Left colon (tissue), 2 donors: ENCODE measurements at regions of chr22 and their contacts with region 1.

Region 1: GRCh38 chr22:36781656-36782627 is 6.0 kb upstream of the IFT27 start:
- DNase-seq: peak; percentile 76 to 82
- ATAC-seq: peak; percentile 97

Region 2: GRCh38 chr22:36684841-36685240 is 97.1 kb before region 1 on chr22:
- intact Hi-C with region 1: no loop called
- DNase-seq: no peak
- ATAC-seq: no peak

Region 3: DNA sequence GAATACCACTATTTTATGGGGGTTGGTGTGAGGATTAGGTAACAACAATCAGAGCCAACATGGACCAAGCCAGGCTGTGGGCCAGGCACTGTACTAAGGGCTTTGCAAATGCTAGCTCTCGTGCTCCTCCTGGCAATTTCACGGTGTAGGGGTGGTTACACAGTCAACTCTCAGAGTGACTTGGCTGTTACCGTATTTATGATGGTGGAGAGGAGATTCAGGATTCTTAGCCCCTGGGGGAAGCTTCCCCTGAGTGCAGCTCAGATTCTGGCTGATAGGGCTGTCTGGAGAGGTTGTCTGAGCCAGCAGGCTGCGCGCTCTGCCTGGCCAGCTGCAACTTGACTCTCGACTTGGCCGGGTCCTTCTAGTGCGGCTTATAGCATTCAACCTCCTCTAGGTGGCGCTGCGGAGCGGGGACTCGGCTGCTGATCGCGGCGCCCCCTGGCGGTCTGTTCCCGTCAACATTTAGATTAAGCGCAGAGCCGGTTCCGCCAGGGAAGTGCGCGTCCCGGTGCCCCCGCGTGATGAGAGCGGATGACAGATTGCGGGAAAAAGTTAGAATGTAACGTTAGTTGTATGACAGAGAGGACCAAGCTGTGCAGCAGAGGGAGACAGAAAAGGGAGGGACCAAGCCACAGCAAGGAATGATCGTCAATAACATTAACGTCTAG is 74.3 kb after region 1 on chr22:
- intact Hi-C with region 1: loop called in 1 of 2 experiments (anchors 10 kb)
- DNase-seq: peak; percentile 78 to 95
- ATAC-seq: peak; percentile 86

Region 4: GRCh38 chr22:36873680-36874537 is 92.0 kb after region 1 on chr22:
- intact Hi-C with region 1: no loop called
- DNase-seq: peak in 1 of 2 donors; percentile 35
- ATAC-seq: peak; percentile 62